ENCODE measurements at regions of chr12 and their contacts with region 1.

Region 1: DNA sequence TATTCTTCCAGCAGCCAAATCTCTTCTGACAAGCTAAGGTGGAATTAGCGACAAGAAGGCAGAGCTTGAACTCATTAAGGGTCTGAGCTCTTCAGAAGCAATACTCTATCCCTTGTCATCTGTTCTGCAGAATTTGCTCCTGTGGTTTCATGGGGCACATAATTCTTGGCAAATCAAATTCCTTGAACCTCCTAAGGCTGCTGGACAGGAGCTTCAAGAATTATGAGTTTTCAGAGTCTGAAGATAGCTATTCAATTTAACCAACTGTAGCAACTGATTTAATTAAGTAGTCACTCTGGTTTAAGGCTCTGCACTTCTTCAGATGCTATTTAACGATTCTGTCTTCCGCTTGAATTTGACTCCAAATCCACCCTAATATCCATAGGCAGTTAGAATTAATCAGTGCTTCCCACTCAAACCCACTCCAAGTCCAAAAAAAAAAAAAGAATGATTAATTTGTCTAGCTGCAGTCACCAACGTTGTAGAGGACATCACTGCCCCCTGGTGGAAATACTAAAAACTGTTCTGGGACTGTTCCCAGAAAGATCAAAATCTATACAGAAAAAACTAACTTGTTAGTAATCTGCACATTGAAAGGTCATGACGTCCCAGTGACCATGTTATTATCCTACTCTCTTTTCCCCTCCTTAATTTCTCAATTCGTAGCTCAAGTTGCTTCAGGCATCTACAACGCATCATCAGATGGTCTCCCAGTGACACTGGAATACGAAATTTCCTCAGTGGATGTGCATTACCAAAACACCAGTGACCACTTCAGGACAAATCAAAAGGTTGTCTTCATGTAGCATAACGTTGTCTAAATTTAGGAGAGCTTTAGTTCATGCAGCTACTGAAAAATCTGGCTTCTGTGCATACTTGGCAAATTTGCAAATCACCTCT is 169.8 kb downstream of the KIF21A start:
- DNase-seq: no peak
- H3K4me3 Mint-ChIP-seq: no peak overlapping the region
- H3K27ac Mint-ChIP-seq: no peak overlapping the region
- H3K4me1 Mint-ChIP-seq: peaks cover 4% of the 10 kb centered on the region
- H3K27me3 Mint-ChIP-seq: peaks cover 6% of the 10 kb centered on the region

Region 2: GRCh38 chr12:38906482-38907170 is 366.5 kb before region 1 on chr12:
- CTCF ChIA-PET with region 1: interaction called, 10 read pairs
- POLR2A ChIA-PET with region 1: no interaction called
- DNase-seq: peak; percentile 71
- H3K4me3 Mint-ChIP-seq: peak overlapping the region; percentile 86
- H3K27ac Mint-ChIP-seq: peak overlapping the region; percentile 58
- H3K4me1 Mint-ChIP-seq: peaks cover 30% of the 10 kb centered on the region
- H3K27me3 Mint-ChIP-seq: peaks cover 21% of the 10 kb centered on the region

Region 3: GRCh38 chr12:38921025-38921677 is 352.0 kb before region 1 on chr12:
- CTCF ChIA-PET with region 1: interaction called, 14 read pairs
- POLR2A ChIA-PET with region 1: no interaction called
- DNase-seq: peak; percentile 30
- H3K4me3 Mint-ChIP-seq: no peak overlapping the region
- H3K27ac Mint-ChIP-seq: no peak overlapping the region
- H3K4me1 Mint-ChIP-seq: no peaks in the 10 kb centered on the region
- H3K27me3 Mint-ChIP-seq: no peaks in the 10 kb centered on the region

Region 4: DNA sequence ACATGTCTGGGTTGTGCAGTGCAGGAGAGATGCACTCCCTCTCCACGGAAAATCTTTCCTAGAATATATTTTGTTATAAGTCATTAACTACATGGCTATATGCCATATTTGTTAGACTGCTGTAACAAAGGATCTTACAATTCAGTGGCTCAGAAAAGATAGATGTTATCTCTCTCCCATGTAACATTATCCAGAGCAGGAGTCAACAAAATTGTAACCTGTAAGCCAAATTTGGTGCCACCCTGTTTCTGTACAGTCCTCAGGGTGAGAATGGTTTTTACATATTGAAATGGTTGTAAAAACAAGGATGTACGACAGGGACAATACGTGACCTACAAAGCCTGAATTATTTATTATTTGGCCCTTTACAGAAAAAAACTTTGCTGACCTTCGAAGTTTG is 14.3 kb after region 1 on chr12:
- CTCF ChIA-PET with region 1: interaction called, 12 read pairs
- POLR2A ChIA-PET with region 1: no interaction called
- DNase-seq: no peak
- H3K4me3 Mint-ChIP-seq: no peak overlapping the region
- H3K27ac Mint-ChIP-seq: no peak overlapping the region
- H3K4me1 Mint-ChIP-seq: peaks cover 3% of the 10 kb centered on the region
- H3K27me3 Mint-ChIP-seq: peaks cover 14% of the 10 kb centered on the region